ENCODE measurements at regions of chr9 and their contacts with region 1.

Region 1: GRCh38 chr9:103680581-103680980 is 413.5 kb upstream of the SMC2 start:
- DNase-seq: no peak
- ATAC-seq: no peak
- H3K4me3 ChIP-seq: no peak overlapping the region
- H3K27ac ChIP-seq: no peak overlapping the region
- H3K4me1 ChIP-seq: no peaks in the 10 kb centered on the region
- H3K27me3 ChIP-seq: no peaks in the 10 kb centered on the region
- CTCF ChIP-seq: no peak

Region 2: DNA sequence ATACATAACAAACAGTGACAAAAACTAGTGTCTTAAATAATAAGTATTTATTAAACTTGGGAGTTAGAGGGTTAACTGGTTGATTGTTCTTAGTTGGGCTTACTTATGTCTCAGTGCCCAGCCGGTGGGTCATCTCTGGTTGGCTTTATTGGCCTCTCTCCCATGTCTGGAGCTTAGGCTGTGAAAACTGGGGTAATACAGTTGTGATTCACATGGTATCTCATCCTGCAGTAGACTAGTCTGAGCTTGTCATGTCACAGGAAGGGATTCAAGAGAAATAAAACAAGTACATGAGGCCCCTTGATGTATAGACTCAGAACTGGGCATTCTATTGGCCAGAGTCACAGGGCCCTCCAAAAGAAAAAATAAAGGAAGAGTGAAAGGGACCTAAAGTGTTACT is 52.9 kb before region 1 on chr9:
- intact Hi-C with region 1: loop called in 1 of 10 experiments (anchors 10 kb)
- DNase-seq: no peak
- ATAC-seq: no peak
- H3K4me3 ChIP-seq: no peak overlapping the region
- H3K27ac ChIP-seq: no peak overlapping the region
- H3K4me1 ChIP-seq: no peaks in the 10 kb centered on the region
- H3K27me3 ChIP-seq: no peaks in the 10 kb centered on the region
- CTCF ChIP-seq: no peak